ENCODE measurements at regions of chr2 and their contacts with region 1.

Region 1: DNA sequence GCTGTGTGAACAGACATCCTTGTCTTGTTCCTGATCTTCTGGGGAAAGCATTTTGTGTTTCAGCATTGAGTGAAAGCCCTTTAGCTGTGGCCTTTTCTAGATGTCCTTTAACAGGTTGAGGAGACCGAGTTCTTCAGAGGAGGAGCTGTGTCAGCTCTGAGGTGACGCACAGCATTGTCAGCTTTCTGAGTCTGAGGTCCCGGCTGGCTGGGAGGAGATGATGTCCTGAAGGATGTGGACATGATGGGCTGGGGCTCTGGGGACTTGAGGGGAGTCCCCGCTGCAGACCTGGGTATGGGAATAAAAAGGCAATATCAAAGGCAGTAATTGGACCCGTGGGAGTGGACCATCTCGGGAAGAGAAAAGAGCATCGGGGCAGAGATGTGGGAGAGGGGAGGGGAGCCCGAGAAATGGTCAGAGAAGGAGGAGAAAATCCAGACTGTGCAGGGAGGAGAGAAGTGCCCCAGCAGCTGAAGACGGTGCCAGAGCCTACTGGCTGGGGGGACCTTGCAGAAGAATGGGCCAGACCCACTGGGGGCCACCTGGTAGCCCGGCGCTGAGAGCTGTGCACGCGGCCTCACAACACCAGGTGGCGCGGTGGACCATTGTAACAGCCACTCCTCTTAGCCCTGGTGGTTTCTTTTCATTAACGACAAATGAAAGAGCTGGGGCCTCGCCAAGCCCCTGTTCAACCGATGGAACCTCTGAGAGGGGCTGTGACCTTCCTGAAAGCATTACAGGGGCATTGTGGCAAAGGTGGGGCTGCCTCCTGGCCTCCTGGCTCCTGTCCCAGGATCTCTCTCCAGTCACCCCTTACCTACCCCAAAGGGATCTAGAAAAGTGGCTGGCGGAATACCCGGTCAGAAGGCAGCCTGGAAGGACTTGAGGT is 61.6 kb downstream of the ST3GAL5 start:
- DNase-seq: peak; percentile 71 to 90 (median 82)
- ATAC-seq: peak; percentile 99
- H3K4me3 ChIP-seq: peak overlapping the region; percentile 1 to 37
- H3K4me3 Mint-ChIP-seq: no peak overlapping the region
- H3K27ac ChIP-seq: no peak overlapping the region
- H3K27ac Mint-ChIP-seq: peak overlapping the region; percentile 62
- H3K4me1 ChIP-seq: peaks cover 8% of the 10 kb centered on the region
- H3K4me1 Mint-ChIP-seq: peaks cover 15% of the 10 kb centered on the region
- H3K27me3 ChIP-seq: no peaks in the 10 kb centered on the region
- H3K27me3 Mint-ChIP-seq: no peaks in the 10 kb centered on the region
- CTCF ChIP-seq: peak; percentile 83

Region 2: GRCh38 chr2:84619794-84620371 is 1207.4 kb before region 1 on chr2:
- CTCF ChIA-PET with region 1: no interaction called
- POLR2A ChIA-PET with region 1: no interaction called
- intact Hi-C with region 1: no loop called
- DNase-seq: no peak
- ATAC-seq: no peak
- H3K4me3 ChIP-seq: no peak overlapping the region
- H3K4me3 Mint-ChIP-seq: no peak overlapping the region
- H3K27ac ChIP-seq: no peak overlapping the region
- H3K27ac Mint-ChIP-seq: no peak overlapping the region
- H3K4me1 ChIP-seq: no peaks in the 10 kb centered on the region
- H3K4me1 Mint-ChIP-seq: no peaks in the 10 kb centered on the region
- H3K27me3 ChIP-seq: no peaks in the 10 kb centered on the region
- H3K27me3 Mint-ChIP-seq: no peaks in the 10 kb centered on the region
- CTCF ChIP-seq: no peak

Region 3: DNA sequence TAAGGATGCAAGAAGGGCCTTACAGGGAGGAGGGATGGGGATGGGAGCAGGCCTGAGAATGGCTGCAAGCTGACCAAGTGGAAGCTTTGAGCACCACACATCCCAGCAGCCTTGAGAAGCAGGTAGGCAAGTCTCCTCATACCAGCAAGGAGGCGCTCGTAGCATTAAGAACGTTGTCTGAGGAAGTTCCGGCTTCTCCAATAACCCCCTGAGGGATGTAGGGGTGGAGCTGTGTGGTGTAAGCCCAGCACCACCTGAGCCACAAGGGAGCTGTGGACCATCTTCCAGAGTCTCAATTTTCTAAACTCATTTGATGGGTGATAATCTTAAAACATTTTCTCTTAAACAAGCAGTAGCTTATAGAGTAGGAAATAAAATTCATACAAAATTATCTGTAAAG is 10.9 kb after region 1 on chr2:
- CTCF ChIA-PET with region 1: interaction called, 16 read pairs
- POLR2A ChIA-PET with region 1: interaction called, 3 read pairs
- intact Hi-C with region 1: no loop called
- DNase-seq: no peak
- ATAC-seq: no peak
- H3K4me3 ChIP-seq: no peak overlapping the region
- H3K4me3 Mint-ChIP-seq: no peak overlapping the region
- H3K27ac ChIP-seq: no peak overlapping the region
- H3K27ac Mint-ChIP-seq: peak overlapping the region; percentile 87
- H3K4me1 ChIP-seq: peaks cover 7% of the 10 kb centered on the region
- H3K4me1 Mint-ChIP-seq: peaks cover 26% of the 10 kb centered on the region
- H3K27me3 ChIP-seq: no peaks in the 10 kb centered on the region
- H3K27me3 Mint-ChIP-seq: no peaks in the 10 kb centered on the region
- CTCF ChIP-seq: no peak

Region 4: GRCh38 chr2:85888684-85889626 is 61.7 kb after region 1 on chr2 and contains the start of gene ST3GAL5:
- CTCF ChIA-PET with region 1: interaction called, 153 read pairs
- POLR2A ChIA-PET with region 1: interaction called, 9 read pairs
- intact Hi-C with region 1: loop called (anchors 1 kb)
- DNase-seq: peak; percentile 84 to 98 (median 95)
- ATAC-seq: peak; percentile 85
- H3K4me3 ChIP-seq: peak within 1 kb of the TSS; percentile 89 to 96
- H3K4me3 Mint-ChIP-seq: peak within 1 kb of the TSS; percentile 95
- H3K27ac ChIP-seq: peak within 1 kb of the TSS; percentile 83 to 84
- H3K27ac Mint-ChIP-seq: peak within 1 kb of the TSS; percentile 97
- H3K4me1 ChIP-seq: peaks cover 59% of the 10 kb centered on the region
- H3K4me1 Mint-ChIP-seq: peaks cover 77% of the 10 kb centered on the region
- H3K27me3 ChIP-seq: no peaks in the 10 kb centered on the region
- H3K27me3 Mint-ChIP-seq: no peaks in the 10 kb centered on the region
- CTCF ChIP-seq: peak; percentile 71
- total RNA-seq, gene ST3GAL5: 110 to 115 TPM

Region 5: GRCh38 chr2:86035883-86036668 is 208.8 kb after region 1 on chr2:
- CTCF ChIA-PET with region 1: interaction called, 36 read pairs
- POLR2A ChIA-PET with region 1: interaction called, 8 read pairs
- intact Hi-C with region 1: loop called (anchors 1 kb)
- DNase-seq: peak; percentile 42 to 91 (median 72)
- ATAC-seq: peak; percentile 50
- H3K4me3 ChIP-seq: peak overlapping the region; percentile 4 to 41
- H3K4me3 Mint-ChIP-seq: peak overlapping the region; percentile 79
- H3K27ac ChIP-seq: peak overlapping the region; percentile 87 to 93
- H3K27ac Mint-ChIP-seq: peak overlapping the region; percentile 100
- H3K4me1 ChIP-seq: peaks cover 83% of the 10 kb centered on the region
- H3K4me1 Mint-ChIP-seq: peaks cover 86% of the 10 kb centered on the region
- H3K27me3 ChIP-seq: no peaks in the 10 kb centered on the region
- H3K27me3 Mint-ChIP-seq: no peaks in the 10 kb centered on the region
- CTCF ChIP-seq: peak; percentile 27

Region 6: GRCh38 chr2:86079981-86080911 is 253.0 kb after region 1 on chr2:
- CTCF ChIA-PET with region 1: interaction called, 344 read pairs
- POLR2A ChIA-PET with region 1: interaction called, 14 read pairs
- intact Hi-C with region 1: loop called (anchors 1 kb)
- DNase-seq: peak; percentile 73 to 92 (median 86)
- ATAC-seq: peak; percentile 76
- H3K4me3 ChIP-seq: peak overlapping the region in 1 of 2 experiments; percentile 9
- H3K4me3 Mint-ChIP-seq: peak overlapping the region; percentile 23
- H3K27ac ChIP-seq: peak overlapping the region; percentile 50 to 89
- H3K27ac Mint-ChIP-seq: peak overlapping the region; percentile 92
- H3K4me1 ChIP-seq: peaks cover 21% of the 10 kb centered on the region
- H3K4me1 Mint-ChIP-seq: peaks cover 27% of the 10 kb centered on the region
- H3K27me3 ChIP-seq: no peaks in the 10 kb centered on the region
- H3K27me3 Mint-ChIP-seq: no peaks in the 10 kb centered on the region
- CTCF ChIP-seq: peak; percentile 69

Region 7: DNA sequence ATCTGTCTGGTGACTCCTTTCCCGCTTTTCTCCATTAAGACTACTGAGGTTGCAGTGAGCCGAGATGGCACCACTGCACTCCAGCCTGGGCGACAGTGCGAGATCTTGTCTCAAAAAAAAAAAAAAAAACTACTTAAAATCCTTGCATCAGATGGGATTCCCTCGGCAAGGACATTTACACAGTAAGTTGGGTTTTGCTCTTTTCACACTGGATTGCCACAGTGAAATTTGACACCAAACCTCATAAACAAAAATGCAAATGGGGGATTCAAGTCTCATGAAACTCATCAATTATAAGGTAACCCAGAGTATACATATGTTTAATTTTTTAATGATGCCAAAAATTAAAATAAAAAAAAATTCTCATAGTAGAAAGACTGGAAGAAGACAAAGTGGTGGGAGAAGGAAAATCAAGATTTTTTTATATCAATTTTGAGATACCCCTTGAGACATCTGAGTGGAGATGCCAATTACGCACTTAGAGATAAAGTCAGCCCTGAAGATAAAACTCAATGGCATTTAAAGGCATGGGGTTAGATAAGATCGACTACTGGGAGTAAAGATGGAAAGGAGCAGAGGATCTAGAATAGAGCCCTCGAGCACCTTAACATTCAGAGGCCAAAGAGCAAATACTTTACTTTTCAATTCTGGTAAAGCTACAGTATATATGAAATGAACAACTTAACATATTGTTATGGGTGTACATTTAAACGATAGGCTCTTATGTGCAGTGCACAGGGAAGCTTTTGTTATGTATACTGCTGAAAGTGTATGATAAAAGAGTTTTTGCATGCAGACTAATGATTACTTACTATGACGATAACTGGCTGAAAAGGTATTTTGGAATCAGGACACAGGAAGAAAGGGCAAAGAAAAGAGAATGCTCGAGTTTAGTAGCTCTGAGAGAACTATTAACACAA is 698.4 kb after region 1 on chr2:
- CTCF ChIA-PET with region 1: no interaction called
- POLR2A ChIA-PET with region 1: no interaction called
- intact Hi-C with region 1: no loop called
- DNase-seq: no peak
- ATAC-seq: no peak
- H3K4me3 ChIP-seq: no peak overlapping the region
- H3K4me3 Mint-ChIP-seq: no peak overlapping the region
- H3K27ac ChIP-seq: no peak overlapping the region
- H3K27ac Mint-ChIP-seq: no peak overlapping the region
- H3K4me1 ChIP-seq: no peaks in the 10 kb centered on the region
- H3K4me1 Mint-ChIP-seq: peaks cover 4% of the 10 kb centered on the region
- H3K27me3 ChIP-seq: no peaks in the 10 kb centered on the region
- H3K27me3 Mint-ChIP-seq: no peaks in the 10 kb centered on the region
- CTCF ChIP-seq: no peak